CD4-positive, alpha-beta memory T cell (primary cell): ENCODE measurements at regions of chr15 and their contacts with region 1.

Region 1: GRCh38 chr15:41331833-41332787 is at the start of gene OIP5:
- DNase-seq: peak; percentile 97 to 100 (median 99)
- H3K4me3 ChIP-seq: peak within 1 kb of the TSS; percentile 88 to 89
- H3K4me3 Mint-ChIP-seq: peak within 1 kb of the TSS; percentile 97 to 100 (median 99)
- H3K27ac ChIP-seq: peak within 1 kb of the TSS; percentile 67
- H3K27ac Mint-ChIP-seq: peak within 1 kb of the TSS; percentile 79 to 98 (median 95)
- H3K4me1 ChIP-seq: peaks cover 32% of the 10 kb centered on the region
- H3K4me1 Mint-ChIP-seq: peaks cover 16 to 45% (median 29%) of the 10 kb centered on the region in 4 donors
- H3K27me3 ChIP-seq: no peaks in the 10 kb centered on the region
- H3K27me3 Mint-ChIP-seq: no peaks in the 10 kb centered on the region
- total RNA-seq, gene OIP5: 0.52 to 0.72 TPM

Region 2: GRCh38 chr15:40274350-40275274 is 1057.5 kb before region 1 on chr15:
- CTCF ChIA-PET with region 1: no interaction called
- POLR2A ChIA-PET with region 1: no interaction called
- intact Hi-C with region 1: no loop called
- DNase-seq: peak; percentile 81 to 88 (median 84)
- H3K4me3 ChIP-seq: no peak overlapping the region
- H3K4me3 Mint-ChIP-seq: no peak overlapping the region
- H3K27ac ChIP-seq: no peak overlapping the region
- H3K27ac Mint-ChIP-seq: peak overlapping the region in 3 of 7 donors; percentile 24 to 54 (median 32)
- H3K4me1 ChIP-seq: peaks cover 5% of the 10 kb centered on the region
- H3K4me1 Mint-ChIP-seq: peaks cover 2 to 11% (median 5%) of the 10 kb centered on the region in 4 donors
- H3K27me3 ChIP-seq: no peaks in the 10 kb centered on the region
- H3K27me3 Mint-ChIP-seq: peaks cover 3 to 18% of the 10 kb centered on the region in 2 donors

Region 3: GRCh38 chr15:41116116-41116871 is 215.8 kb before region 1 on chr15 and contains the start of gene INO80:
- CTCF ChIA-PET with region 1: no interaction called
- POLR2A ChIA-PET with region 1: interaction called, 8 read pairs
- intact Hi-C with region 1: loop called (anchors 2 kb)
- DNase-seq: peak; percentile 96 to 97 (median 97)
- H3K4me3 ChIP-seq: peak within 1 kb of the TSS; percentile 95 to 100
- H3K4me3 Mint-ChIP-seq: peak within 1 kb of the TSS; percentile 93 to 99 (median 96)
- H3K27ac ChIP-seq: peak within 1 kb of the TSS; percentile 84
- H3K27ac Mint-ChIP-seq: peak within 1 kb of the TSS; percentile 87 to 100 (median 99)
- H3K4me1 ChIP-seq: peaks cover 31% of the 10 kb centered on the region
- H3K4me1 Mint-ChIP-seq: peaks cover 15 to 36% (median 26%) of the 10 kb centered on the region in 4 donors
- H3K27me3 ChIP-seq: no peaks in the 10 kb centered on the region
- H3K27me3 Mint-ChIP-seq: peaks cover 0 to 2% of the 10 kb centered on the region in 2 donors
- total RNA-seq, gene INO80: 29.7 to 34.4 TPM

Region 4: DNA sequence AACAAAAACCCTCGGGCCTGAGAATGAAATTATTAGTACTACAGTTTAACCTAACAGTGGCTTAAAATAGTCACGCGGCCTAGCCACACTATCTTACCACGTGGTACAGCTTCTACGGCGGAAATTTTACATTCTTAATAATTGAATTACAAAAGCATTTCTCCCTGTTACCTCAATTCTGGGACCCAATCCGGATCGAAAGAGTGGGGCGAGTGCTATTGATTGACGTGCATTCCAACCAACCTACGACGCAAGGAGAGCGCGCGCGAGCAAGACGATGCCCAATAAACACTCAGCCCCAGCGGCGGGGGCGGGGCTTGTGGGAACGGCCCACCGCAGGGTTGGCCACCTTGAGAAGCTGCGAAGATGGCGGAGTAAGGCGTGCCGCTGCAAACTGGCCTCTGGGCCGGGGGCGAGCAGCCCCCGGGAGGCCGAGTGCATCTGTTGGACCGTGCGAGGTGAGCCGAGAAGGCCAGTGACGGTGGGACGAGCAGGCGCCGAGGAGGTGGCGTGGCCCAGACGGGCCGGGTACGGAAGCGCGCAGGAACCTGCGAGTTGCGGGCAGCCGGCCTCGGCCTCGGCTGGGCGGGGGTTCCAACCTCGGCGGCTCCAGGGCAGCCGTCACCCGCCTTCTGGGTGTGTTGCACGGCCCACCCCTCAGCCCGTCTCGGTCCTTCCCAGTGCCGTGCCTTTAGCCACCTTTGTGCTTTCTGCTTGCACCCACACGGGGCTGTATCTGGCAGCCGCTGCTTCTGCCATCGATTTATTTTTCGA is 48.3 kb before region 1 on chr15:
- CTCF ChIA-PET with region 1: interaction called, 4 read pairs
- POLR2A ChIA-PET with region 1: interaction called, 16 read pairs
- intact Hi-C with region 1: loop called (anchors 1 kb)
- DNase-seq: peak; percentile 97 to 98 (median 98)
- H3K4me3 ChIP-seq: peak overlapping the region; percentile 91 to 97
- H3K4me3 Mint-ChIP-seq: peak overlapping the region; percentile 93 to 99 (median 98)
- H3K27ac ChIP-seq: peak overlapping the region; percentile 86
- H3K27ac Mint-ChIP-seq: peak overlapping the region; percentile 92 to 99 (median 99)
- H3K4me1 ChIP-seq: peaks cover 43% of the 10 kb centered on the region
- H3K4me1 Mint-ChIP-seq: peaks cover 28 to 53% (median 41%) of the 10 kb centered on the region in 4 donors
- H3K27me3 ChIP-seq: no peaks in the 10 kb centered on the region
- H3K27me3 Mint-ChIP-seq: no peaks in the 10 kb centered on the region

Region 5: DNA sequence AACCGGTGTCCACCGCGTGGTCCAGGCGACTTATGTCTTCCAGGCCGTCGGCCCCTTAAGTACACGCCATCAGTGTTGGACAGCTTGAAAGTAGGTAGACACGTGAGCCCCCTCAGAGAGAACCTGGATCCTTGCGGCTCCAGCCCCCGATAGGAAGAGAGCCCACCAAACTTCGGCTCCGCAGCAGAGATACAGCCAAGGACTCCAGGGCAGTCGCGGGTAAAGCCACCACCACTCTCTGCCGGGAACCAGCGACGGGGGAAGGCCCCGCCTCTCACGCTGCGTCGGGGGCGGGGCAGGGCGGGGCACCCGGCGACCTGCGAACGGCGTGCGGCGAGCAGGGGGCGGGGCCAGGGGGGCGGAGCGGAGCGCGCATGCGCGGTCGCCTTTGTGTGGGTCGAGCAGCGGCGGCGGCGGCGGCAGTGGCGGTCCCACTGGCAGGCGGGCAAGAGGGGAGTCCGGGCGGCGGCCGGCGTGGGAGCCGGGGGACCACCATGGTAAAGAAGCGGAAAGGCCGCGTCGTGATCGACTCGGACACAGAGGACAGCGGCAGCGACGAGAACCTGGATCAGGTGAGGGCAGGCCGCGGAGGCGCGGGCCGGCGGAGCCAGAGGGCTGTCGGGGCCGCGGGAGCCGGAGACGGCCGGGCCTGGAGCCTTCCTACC is 84.8 kb after region 1 on chr15 and contains the start of gene RTF1:
- CTCF ChIA-PET with region 1: no interaction called
- POLR2A ChIA-PET with region 1: interaction called, 5 read pairs
- intact Hi-C with region 1: loop called (anchors 5 kb)
- DNase-seq: peak; percentile 93 to 98 (median 96)
- H3K4me3 ChIP-seq: peak within 1 kb of the TSS; percentile 91 to 100
- H3K4me3 Mint-ChIP-seq: peak within 1 kb of the TSS; percentile 91 to 96 (median 96)
- H3K27ac ChIP-seq: peak within 1 kb of the TSS; percentile 72
- H3K27ac Mint-ChIP-seq: peak within 1 kb of the TSS; percentile 86 to 98 (median 96)
- H3K4me1 ChIP-seq: peaks cover 34% of the 10 kb centered on the region
- H3K4me1 Mint-ChIP-seq: peaks cover 24 to 55% (median 38%) of the 10 kb centered on the region in 4 donors
- H3K27me3 ChIP-seq: no peaks in the 10 kb centered on the region
- H3K27me3 Mint-ChIP-seq: no peaks in the 10 kb centered on the region
- total RNA-seq, gene RTF1: 31.9 to 35.9 TPM

Region 6: DNA sequence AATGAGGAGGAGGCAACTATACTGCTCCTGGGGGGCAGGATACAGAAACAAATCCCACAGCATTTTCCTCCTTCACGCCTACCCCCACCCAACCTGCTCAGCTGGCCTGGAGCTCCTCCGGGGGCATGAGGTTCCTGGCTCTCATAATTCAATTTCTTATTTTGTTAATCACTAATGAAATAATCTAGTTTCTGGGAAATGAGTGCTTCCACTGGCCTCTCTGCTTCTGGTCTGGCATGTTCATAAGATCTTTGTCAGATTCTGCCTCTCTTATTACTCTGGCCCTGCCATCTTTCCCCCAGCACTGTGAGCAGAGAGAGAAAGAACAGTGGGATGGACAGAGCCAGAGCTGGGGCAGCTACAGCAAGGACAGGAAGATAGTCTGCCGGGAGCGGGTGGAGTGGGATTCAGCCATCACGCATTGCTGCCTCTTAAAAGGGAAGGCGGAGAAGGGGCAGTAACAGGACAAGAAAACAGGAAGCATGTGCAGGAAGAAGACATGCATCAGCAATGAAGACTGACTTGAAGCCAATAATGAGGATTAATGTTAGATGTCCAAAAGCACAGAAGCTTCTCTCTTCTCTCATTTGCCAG is 198.3 kb after region 1 on chr15:
- CTCF ChIA-PET with region 1: no interaction called
- POLR2A ChIA-PET with region 1: no interaction called
- intact Hi-C with region 1: no loop called
- DNase-seq: no peak
- H3K4me3 ChIP-seq: no peak overlapping the region
- H3K4me3 Mint-ChIP-seq: no peak overlapping the region
- H3K27ac ChIP-seq: no peak overlapping the region
- H3K27ac Mint-ChIP-seq: peak overlapping the region in 1 of 7 donors; percentile 58
- H3K4me1 ChIP-seq: no peaks in the 10 kb centered on the region
- H3K4me1 Mint-ChIP-seq: no peaks in the 10 kb centered on the region
- H3K27me3 ChIP-seq: no peaks in the 10 kb centered on the region
- H3K27me3 Mint-ChIP-seq: no peaks in the 10 kb centered on the region

Region 7: GRCh38 chr15:41980654-41981323 is 648.7 kb after region 1 on chr15:
- CTCF ChIA-PET with region 1: no interaction called
- POLR2A ChIA-PET with region 1: no interaction called
- intact Hi-C with region 1: no loop called
- DNase-seq: no peak
- H3K4me3 ChIP-seq: no peak overlapping the region
- H3K4me3 Mint-ChIP-seq: no peak overlapping the region
- H3K27ac ChIP-seq: no peak overlapping the region
- H3K27ac Mint-ChIP-seq: peak overlapping the region in 2 of 7 donors; percentile 6 to 17
- H3K4me1 ChIP-seq: no peaks in the 10 kb centered on the region
- H3K4me1 Mint-ChIP-seq: peaks cover 0 to 12% (median 5%) of the 10 kb centered on the region in 4 donors
- H3K27me3 ChIP-seq: no peaks in the 10 kb centered on the region
- H3K27me3 Mint-ChIP-seq: peaks cover under 1 to 3% of the 10 kb centered on the region in 2 donors